Activated CD4-positive, alpha-beta T cell treated with anti-CD3 and anti-CD28 coated beads for 36 hours (primary cell): ENCODE measurements at regions of chr11 and their contacts with region 1.

Region 1: DNA sequence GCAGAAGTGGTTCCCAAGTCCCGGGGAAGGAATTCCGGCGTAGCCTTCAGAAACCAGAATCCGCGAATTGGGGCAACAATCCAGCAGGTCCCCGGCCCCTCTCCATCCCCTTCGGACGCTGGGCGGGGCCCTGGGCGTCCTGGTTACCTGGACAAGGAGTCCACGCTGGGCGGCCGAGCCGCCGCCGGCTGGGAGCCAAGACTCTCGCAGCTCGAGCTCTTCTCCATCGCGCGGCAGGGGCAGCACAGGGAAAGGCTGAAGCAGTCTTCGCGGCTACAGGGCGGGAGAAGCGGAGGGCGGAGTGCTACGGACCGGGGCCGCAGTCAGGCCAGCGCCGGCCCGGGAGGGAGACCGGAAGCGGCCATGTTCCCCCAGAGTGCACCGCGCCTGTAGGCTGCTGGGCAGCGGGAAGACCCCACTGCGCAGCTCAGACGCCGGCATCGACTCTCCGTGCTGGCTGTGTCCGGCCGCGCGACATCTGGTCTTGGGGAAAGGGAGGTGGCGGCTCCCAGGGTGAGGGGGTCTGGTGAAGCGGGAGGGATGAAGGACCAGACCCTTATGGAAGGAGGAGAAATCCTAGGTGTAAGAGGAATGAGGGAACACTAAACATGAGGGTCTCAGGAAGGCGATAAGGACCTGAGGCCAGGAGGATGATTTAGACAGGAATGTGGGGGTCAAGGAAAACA is at the start of gene MTMR2:
- DNase-seq: peak; percentile 75
- ATAC-seq: peak; percentile 93
- H3K4me3 Mint-ChIP-seq: peak within 1 kb of the TSS; percentile 99
- H3K27ac Mint-ChIP-seq: peak within 1 kb of the TSS; percentile 99
- H3K4me1 Mint-ChIP-seq: peaks cover 25% of the 10 kb centered on the region
- H3K27me3 Mint-ChIP-seq: no peaks in the 10 kb centered on the region
- total RNA-seq, gene MTMR2: 32.8 to 36.5 TPM

Region 2: GRCh38 chr11:95835768-95836488 is 87.9 kb before region 1 on chr11:
- CTCF ChIA-PET with region 1: no interaction called
- POLR2A ChIA-PET with region 1: no interaction called
- intact Hi-C with region 1: loop called in 1 of 2 experiments (anchors 5 kb)
- DNase-seq: peak; percentile 69
- ATAC-seq: peak; percentile 87
- H3K4me3 Mint-ChIP-seq: no peak overlapping the region
- H3K27ac Mint-ChIP-seq: no peak overlapping the region
- H3K4me1 Mint-ChIP-seq: peaks cover 6% of the 10 kb centered on the region
- H3K27me3 Mint-ChIP-seq: no peaks in the 10 kb centered on the region

Region 3: GRCh38 chr11:96054870-96055705 is 131.2 kb after region 1 on chr11:
- CTCF ChIA-PET with region 1: no interaction called
- POLR2A ChIA-PET with region 1: no interaction called
- intact Hi-C with region 1: loop called (anchors 5 to 10 kb)
- DNase-seq: no peak
- ATAC-seq: peak; percentile 20
- H3K4me3 Mint-ChIP-seq: no peak overlapping the region
- H3K27ac Mint-ChIP-seq: peak overlapping the region; percentile 88
- H3K4me1 Mint-ChIP-seq: peaks cover 86% of the 10 kb centered on the region
- H3K27me3 Mint-ChIP-seq: no peaks in the 10 kb centered on the region

Region 4: DNA sequence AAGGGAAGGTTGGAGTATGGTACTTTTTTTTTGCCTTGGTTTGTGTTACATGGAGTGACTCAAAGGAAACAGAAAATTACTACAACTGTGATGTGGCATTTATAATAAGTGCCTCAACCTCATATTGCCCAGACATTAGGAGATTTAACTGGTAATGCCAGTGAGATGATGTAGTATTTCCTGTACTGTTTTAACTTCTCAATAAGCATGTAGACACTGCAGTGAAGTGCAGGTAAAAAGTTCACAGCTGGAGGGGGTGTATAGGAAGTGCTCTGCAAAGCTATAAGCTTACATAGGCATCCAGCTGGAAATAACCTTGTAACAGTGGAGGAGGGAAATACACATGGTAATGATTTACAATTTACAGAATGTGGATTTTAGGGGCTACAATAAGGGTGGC is 138.3 kb after region 1 on chr11:
- CTCF ChIA-PET with region 1: no interaction called
- POLR2A ChIA-PET with region 1: no interaction called
- intact Hi-C with region 1: loop called (anchors 5 to 10 kb)
- DNase-seq: peak; percentile 65
- ATAC-seq: peak; percentile 87
- H3K4me3 Mint-ChIP-seq: peak overlapping the region; percentile 42
- H3K27ac Mint-ChIP-seq: peak overlapping the region; percentile 94
- H3K4me1 Mint-ChIP-seq: peaks cover 81% of the 10 kb centered on the region
- H3K27me3 Mint-ChIP-seq: no peaks in the 10 kb centered on the region

Region 5: GRCh38 chr11:96091476-96091875 is 167.6 kb after region 1 on chr11:
- CTCF ChIA-PET with region 1: no interaction called
- POLR2A ChIA-PET with region 1: no interaction called
- intact Hi-C with region 1: no loop called
- DNase-seq: no peak
- ATAC-seq: peak; percentile 82
- H3K4me3 Mint-ChIP-seq: no peak overlapping the region
- H3K27ac Mint-ChIP-seq: no peak overlapping the region
- H3K4me1 Mint-ChIP-seq: peaks cover 84% of the 10 kb centered on the region
- H3K27me3 Mint-ChIP-seq: no peaks in the 10 kb centered on the region